ENCODE measurements at regions of chr10 and their contacts with region 1.

Region 1: GRCh38 chr10:78543749-78544362 is 510.2 kb downstream of the RPS24 start:
- DNase-seq: no peak
- H3K4me3 ChIP-seq: no peak overlapping the region
- H3K27ac ChIP-seq: no peak overlapping the region
- H3K4me1 ChIP-seq: peaks cover 0 to 7% (median 0%) of the 10 kb centered on the region in 4 experiments; a peak in 3 of 7 replicates
- H3K27me3 ChIP-seq: no peaks in the 10 kb centered on the region
- CTCF ChIP-seq: no peak
- EP300 ChIP-seq: no peak
- POLR2A ChIP-seq: no peak
- RAD21 ChIP-seq: no peak

Region 2: DNA sequence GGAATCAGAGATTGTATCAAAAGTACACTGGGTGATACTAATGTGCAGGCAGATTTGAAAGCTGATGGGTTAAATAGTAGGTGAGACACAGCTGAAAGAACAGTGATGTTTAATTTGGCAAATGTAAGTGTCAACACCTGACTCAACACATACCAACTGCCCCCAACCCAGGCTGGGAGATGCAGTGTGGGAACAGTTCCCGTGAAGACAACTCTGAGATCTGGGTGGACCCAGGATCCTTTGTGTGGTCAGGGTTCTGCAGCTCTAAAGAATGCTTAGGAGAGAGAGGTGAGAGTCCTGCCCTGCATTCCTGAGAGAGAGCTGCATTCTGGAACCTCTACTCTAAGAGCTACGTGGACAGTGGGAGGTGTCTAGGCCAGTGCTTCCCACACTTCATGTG is 30.5 kb before region 1 on chr10:
- CTCF ChIA-PET with region 1: no interaction called
- POLR2A ChIA-PET with region 1: no interaction called
- DNase-seq: peak in 1 of 2 experiments; percentile 22
- H3K4me3 ChIP-seq: no peak overlapping the region
- H3K27ac ChIP-seq: no peak overlapping the region
- H3K4me1 ChIP-seq: no peaks in the 10 kb centered on the region
- H3K27me3 ChIP-seq: no peaks in the 10 kb centered on the region
- CTCF ChIP-seq: no peak
- EP300 ChIP-seq: no peak
- POLR2A ChIP-seq: no peak
- RAD21 ChIP-seq: no peak

Region 3: GRCh38 chr10:78559661-78560340 is 15.9 kb after region 1 on chr10:
- CTCF ChIA-PET with region 1: interaction called, 10 read pairs
- POLR2A ChIA-PET with region 1: interaction called, 3 read pairs
- DNase-seq: no peak
- H3K4me3 ChIP-seq: no peak overlapping the region
- H3K27ac ChIP-seq: no peak overlapping the region
- H3K4me1 ChIP-seq: peaks cover 0 to 8% (median 4%) of the 10 kb centered on the region in 4 experiments; a peak in 4 of 7 replicates
- H3K27me3 ChIP-seq: 0 out of 7 replicates have a peak, but pooled peaks cover 0 to 2% (median 0%) of the 10 kb centered on the region in 4 experiments
- CTCF ChIP-seq: no peak
- EP300 ChIP-seq: no peak
- POLR2A ChIP-seq: no peak
- RAD21 ChIP-seq: no peak